Aorta (tissue), 5 donors: ENCODE measurements at regions of chr10 and their contacts with region 1.

Region 1: DNA sequence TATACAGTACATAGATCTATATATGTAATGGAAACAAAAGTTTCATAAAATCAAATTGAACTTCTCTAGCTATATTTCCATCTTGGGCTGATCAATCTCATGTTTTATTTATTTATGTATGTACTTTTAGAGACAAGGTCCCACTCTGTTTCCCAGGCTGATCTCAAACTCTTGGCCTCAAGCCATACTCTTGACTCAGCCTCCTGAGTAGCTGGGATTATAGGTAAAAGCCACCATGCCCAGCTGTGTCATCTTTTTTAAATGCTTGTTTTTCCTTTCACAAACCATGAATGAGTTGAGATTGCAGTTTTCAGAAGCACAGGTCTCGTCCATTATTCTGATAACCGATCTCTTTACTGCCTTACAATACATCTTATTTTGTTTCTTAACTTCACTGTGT is 400.9 kb downstream of the KCNMA1 start:
- DNase-seq: no peak
- ATAC-seq: no peak
- H3K4me3 ChIP-seq: no peak overlapping the region
- H3K27ac ChIP-seq: peak overlapping the region in 1 of 2 donors; percentile 22
- H3K4me1 ChIP-seq: peaks cover 6 to 11% of the 10 kb centered on the region in 2 donors
- H3K27me3 ChIP-seq: no peaks in the 10 kb centered on the region

Region 2: DNA sequence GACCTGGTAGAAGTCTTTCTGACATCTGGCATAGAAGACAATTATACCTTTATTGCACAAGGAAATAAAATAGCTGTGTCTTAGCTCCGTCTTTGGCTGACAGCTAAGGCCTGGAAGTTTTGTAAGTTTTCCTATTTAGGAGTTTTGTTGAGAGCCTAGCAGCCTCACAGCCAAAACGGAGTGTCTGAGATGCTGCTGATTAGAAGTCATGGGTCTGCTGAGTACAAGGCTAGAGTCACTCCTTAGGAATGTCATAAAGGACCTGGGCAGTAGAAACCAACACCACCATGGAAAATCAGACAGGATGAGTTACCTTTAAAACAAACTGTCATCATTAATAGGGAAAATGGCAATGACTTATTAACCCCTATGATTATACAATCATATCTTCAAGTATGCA is 41.6 kb before region 1 on chr10:
- intact Hi-C with region 1: loop called in 1 of 2 experiments (anchors 5 kb)
- DNase-seq: no peak
- ATAC-seq: peak; percentile 83
- H3K4me3 ChIP-seq: no peak overlapping the region
- H3K27ac ChIP-seq: peak overlapping the region; percentile 44 to 93
- H3K4me1 ChIP-seq: peaks cover 7 to 9% of the 10 kb centered on the region in 2 donors
- H3K27me3 ChIP-seq: no peaks in the 10 kb centered on the region

Region 3: GRCh38 chr10:77320971-77321471 is 84.3 kb after region 1 on chr10:
- intact Hi-C with region 1: no loop called
- DNase-seq: no peak
- ATAC-seq: no peak
- H3K4me3 ChIP-seq: no peak overlapping the region
- H3K27ac ChIP-seq: no peak overlapping the region
- H3K4me1 ChIP-seq: peaks cover 0 to 7% of the 10 kb centered on the region in 2 donors
- H3K27me3 ChIP-seq: no peaks in the 10 kb centered on the region